GM12878 (cell line): ENCODE measurements at regions of chr11 and their contacts with region 1.

Region 1: GRCh38 chr11:27485930-27486773 is 13.6 kb upstream of the LGR4 start:
- DNase-seq: no peak
- ATAC-seq: peak; percentile 82
- H3K4me3 ChIP-seq: no peak overlapping the region
- H3K27ac ChIP-seq: no peak overlapping the region
- H3K4me1 ChIP-seq: no peaks in the 10 kb centered on the region
- H3K27me3 ChIP-seq: no peaks in the 10 kb centered on the region
- CTCF ChIP-seq: peak; percentile 80 to 87 (median 82); a peak in 5 of 6 replicates
- EP300 ChIP-seq: no peak
- POLR2A ChIP-seq: no peak
- RAD21 ChIP-seq: peak; percentile 96

Region 2: GRCh38 chr11:26297189-26297975 is 1188.8 kb before region 1 on chr11:
- CTCF ChIA-PET with region 1: interaction called, 11 read pairs
- POLR2A ChIA-PET with region 1: no interaction called
- RAD21 ChIA-PET with region 1: no interaction called
- SMC1A ChIA-PET with region 1: no interaction called
- in situ Hi-C with region 1: no loop called
- intact Hi-C with region 1: no loop called
- DNase-seq: no peak
- ATAC-seq: peak; percentile 92
- H3K4me3 ChIP-seq: no peak overlapping the region
- H3K27ac ChIP-seq: no peak overlapping the region
- H3K4me1 ChIP-seq: no peaks in the 10 kb centered on the region
- H3K27me3 ChIP-seq: no peaks in the 10 kb centered on the region
- CTCF ChIP-seq: peak; percentile 56 to 73 (median 67)
- EP300 ChIP-seq: no peak
- POLR2A ChIP-seq: no peak
- RAD21 ChIP-seq: peak; percentile 79

Region 3: GRCh38 chr11:26704249-26704648 is 781.9 kb before region 1 on chr11:
- CTCF ChIA-PET with region 1: no interaction called
- POLR2A ChIA-PET with region 1: no interaction called
- RAD21 ChIA-PET with region 1: no interaction called
- SMC1A ChIA-PET with region 1: no interaction called
- in situ Hi-C with region 1: no loop called
- intact Hi-C with region 1: no loop called
- DNase-seq: no peak
- ATAC-seq: no peak
- H3K4me3 ChIP-seq: no peak overlapping the region
- H3K27ac ChIP-seq: no peak overlapping the region
- H3K4me1 ChIP-seq: no peaks in the 10 kb centered on the region
- H3K27me3 ChIP-seq: no peaks in the 10 kb centered on the region
- CTCF ChIP-seq: no peak
- EP300 ChIP-seq: no peak
- POLR2A ChIP-seq: no peak
- RAD21 ChIP-seq: no peak

Region 4: DNA sequence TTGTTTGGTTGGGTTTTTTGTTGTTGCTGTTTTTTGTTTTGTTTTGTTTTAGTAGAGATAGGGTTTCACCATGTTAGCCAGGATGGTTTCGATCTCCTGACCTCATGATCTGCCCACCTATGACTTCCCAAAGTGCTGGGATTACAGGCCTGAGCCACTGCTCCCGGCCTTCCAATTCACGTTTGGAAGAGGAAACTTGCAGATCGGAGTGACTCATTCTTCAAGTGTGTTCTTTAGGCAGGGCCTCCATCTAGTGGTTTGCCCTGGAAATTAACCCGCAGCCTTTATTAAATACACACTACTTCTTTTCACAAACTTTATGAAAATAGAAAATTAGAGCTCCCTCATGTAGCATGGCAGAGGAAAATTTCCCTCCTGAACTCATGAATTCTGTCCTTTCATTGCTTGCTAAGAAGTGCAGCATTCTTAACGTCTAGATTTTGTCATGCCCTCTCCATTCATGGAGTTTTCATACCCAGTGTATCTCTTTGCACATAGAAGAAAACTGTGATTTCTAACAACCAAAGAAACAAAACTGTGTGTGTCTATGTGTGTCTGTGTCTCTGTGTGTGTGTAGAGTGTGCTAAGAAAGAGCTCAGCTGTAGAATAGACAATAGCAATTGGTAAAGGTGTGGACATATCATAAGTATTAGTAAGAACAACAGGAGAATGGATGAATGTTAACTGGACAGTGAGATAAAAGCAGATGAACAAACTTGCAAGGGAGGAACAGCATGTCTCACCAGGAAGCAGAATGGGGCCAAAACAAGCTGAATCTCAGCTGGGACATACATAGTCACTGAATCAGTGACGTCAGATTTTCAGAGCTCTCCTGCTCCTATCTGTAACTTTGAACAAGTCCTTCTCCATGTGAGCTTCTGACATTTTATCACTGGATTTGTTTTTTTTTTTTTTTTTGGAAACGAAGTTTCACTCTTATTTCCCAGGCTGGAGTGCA is 327.2 kb before region 1 on chr11:
- CTCF ChIA-PET with region 1: interaction called, 11 read pairs
- POLR2A ChIA-PET with region 1: no interaction called
- RAD21 ChIA-PET with region 1: interaction called, 4 read pairs
- SMC1A ChIA-PET with region 1: interaction called, 4 read pairs
- in situ Hi-C with region 1: no loop called
- intact Hi-C with region 1: no loop called
- DNase-seq: no peak
- ATAC-seq: peak; percentile 82
- H3K4me3 ChIP-seq: no peak overlapping the region
- H3K27ac ChIP-seq: no peak overlapping the region
- H3K4me1 ChIP-seq: no peaks in the 10 kb centered on the region
- H3K27me3 ChIP-seq: no peaks in the 10 kb centered on the region
- CTCF ChIP-seq: peak; percentile 62 to 75 (median 62); a peak in 5 of 6 replicates
- EP300 ChIP-seq: no peak
- POLR2A ChIP-seq: no peak
- RAD21 ChIP-seq: peak; percentile 89

Region 5: GRCh38 chr11:27201454-27202236 is 284.5 kb before region 1 on chr11:
- CTCF ChIA-PET with region 1: interaction called, 14 read pairs
- POLR2A ChIA-PET with region 1: no interaction called
- RAD21 ChIA-PET with region 1: interaction called, 6 read pairs
- SMC1A ChIA-PET with region 1: interaction called, 5 read pairs
- in situ Hi-C with region 1: no loop called
- intact Hi-C with region 1: no loop called
- DNase-seq: no peak
- ATAC-seq: no peak
- H3K4me3 ChIP-seq: no peak overlapping the region
- H3K27ac ChIP-seq: no peak overlapping the region
- H3K4me1 ChIP-seq: no peaks in the 10 kb centered on the region
- H3K27me3 ChIP-seq: no peaks in the 10 kb centered on the region
- CTCF ChIP-seq: no peak
- EP300 ChIP-seq: no peak
- POLR2A ChIP-seq: no peak
- RAD21 ChIP-seq: no peak

Region 6: DNA sequence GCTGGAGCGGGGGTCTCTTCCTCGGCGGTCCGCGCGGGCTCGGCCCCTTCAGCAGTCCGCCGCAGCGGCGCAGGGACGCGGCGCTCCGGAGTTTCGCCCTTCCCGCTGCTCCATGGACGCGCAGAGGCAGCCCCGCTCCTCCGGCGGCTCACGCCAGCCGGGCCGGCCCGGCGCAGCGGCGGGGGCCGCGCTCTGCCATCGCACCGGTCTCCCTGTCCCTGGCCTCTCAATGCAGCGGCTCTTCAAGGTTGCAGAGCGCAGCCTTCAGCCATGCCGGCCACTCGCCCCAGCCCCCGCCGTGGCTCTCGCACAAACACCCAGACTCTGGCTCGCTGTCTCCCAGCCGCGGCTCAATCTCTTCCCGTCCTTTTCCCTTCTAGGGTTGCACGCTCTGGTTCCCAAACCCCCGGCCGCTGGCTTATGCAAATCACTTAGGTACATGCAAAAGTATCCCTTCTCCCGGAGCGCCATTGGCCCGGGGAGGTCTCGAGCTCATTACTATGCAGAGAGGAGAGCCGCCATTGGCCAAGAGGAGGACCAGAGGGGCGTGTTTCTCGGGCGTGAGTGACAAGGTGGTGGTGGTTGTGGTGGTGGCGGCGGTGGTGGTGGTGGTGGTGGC is 13.6 kb before region 1 on chr11 and contains the start of gene LGR4:
- CTCF ChIA-PET with region 1: interaction called, 20 read pairs
- POLR2A ChIA-PET with region 1: no interaction called
- RAD21 ChIA-PET with region 1: interaction called, 4 read pairs
- SMC1A ChIA-PET with region 1: interaction called, 15 read pairs
- in situ Hi-C with region 1: no loop called
- intact Hi-C with region 1: no loop called
- DNase-seq: no peak
- ATAC-seq: peak; percentile 88
- H3K4me3 ChIP-seq: peak within 1 kb of the TSS; percentile 67; the same call in 1 of the 2 replicates
- H3K27ac ChIP-seq: no peak within 1 kb of the TSS
- H3K4me1 ChIP-seq: 0 out of 2 replicates have a peak, but pooled peaks cover 3% of the 10 kb centered on the region
- H3K27me3 ChIP-seq: peaks cover 3% of the 10 kb centered on the region in 2 experiments; a peak in 2 of 4 replicates
- CTCF ChIP-seq: no peak
- EP300 ChIP-seq: no peak
- POLR2A ChIP-seq: no peak
- RAD21 ChIP-seq: no peak
- polyA plus RNA-seq, gene LGR4: not detected

Region 7: DNA sequence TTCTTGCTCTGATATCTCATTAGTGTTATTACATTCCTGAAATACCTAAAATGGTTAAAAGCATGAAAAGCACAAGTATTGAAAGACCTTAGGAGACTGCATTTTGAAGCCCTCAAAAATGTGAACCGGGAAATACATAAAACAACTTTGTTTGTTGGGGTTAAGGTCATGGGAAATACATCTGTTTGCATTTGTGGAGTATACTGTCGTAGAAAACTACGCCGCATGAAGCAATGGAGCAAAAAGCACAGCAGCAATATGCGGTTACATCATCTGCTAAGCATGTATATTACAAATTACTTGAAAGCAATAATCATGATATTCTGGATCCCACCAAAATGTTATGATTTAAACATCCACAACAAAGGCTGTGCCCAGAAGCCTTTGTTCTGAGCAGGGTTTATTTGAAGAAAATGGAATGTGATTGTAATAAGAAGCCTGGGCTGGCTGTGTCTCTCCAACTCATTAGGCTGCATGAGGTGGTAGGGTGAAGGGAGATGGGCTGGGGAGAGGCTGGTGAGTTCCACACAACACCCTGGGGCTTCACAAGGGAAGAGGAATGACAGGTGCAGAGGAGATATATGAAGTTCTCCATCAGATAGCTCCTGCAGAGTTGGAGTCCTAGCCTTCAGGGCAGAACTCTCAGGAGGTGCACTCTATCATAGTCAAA is 85.1 kb after region 1 on chr11:
- CTCF ChIA-PET with region 1: no interaction called
- POLR2A ChIA-PET with region 1: no interaction called
- RAD21 ChIA-PET with region 1: no interaction called
- SMC1A ChIA-PET with region 1: no interaction called
- in situ Hi-C with region 1: no loop called
- intact Hi-C with region 1: no loop called
- DNase-seq: no peak
- ATAC-seq: no peak
- H3K4me3 ChIP-seq: no peak overlapping the region
- H3K27ac ChIP-seq: no peak overlapping the region
- H3K4me1 ChIP-seq: no peaks in the 10 kb centered on the region
- H3K27me3 ChIP-seq: no peaks in the 10 kb centered on the region
- CTCF ChIP-seq: no peak
- EP300 ChIP-seq: no peak
- POLR2A ChIP-seq: no peak
- RAD21 ChIP-seq: no peak